K562 (cell line): ENCODE measurements at regions of chr22 and their contacts with region 1.

Region 1: GRCh38 chr22:37636186-37636948 is 3.1 kb upstream of the SH3BP1 start:
- DNase-seq: peak in 1 of 4 experiments; percentile 27
- ATAC-seq: no peak
- H3K4me3 ChIP-seq: no peak overlapping the region
- H3K27ac ChIP-seq: no peak overlapping the region
- H3K4me1 ChIP-seq: peaks cover 45 to 88% of the 10 kb centered on the region in 2 experiments
- H3K27me3 ChIP-seq: no peaks in the 10 kb centered on the region
- CTCF ChIP-seq: peak; percentile 27 to 62 (median 29); a peak in 4 of 6 replicates
- EP300 ChIP-seq: no peak
- POLR2A ChIP-seq: no peak
- RAD21 ChIP-seq: no peak

Region 2: GRCh38 chr22:37563153-37564081 is 73.0 kb before region 1 on chr22:
- CTCF ChIA-PET with region 1: no interaction called
- POLR2A ChIA-PET with region 1: no interaction called
- in situ Hi-C with region 1: no loop called
- intact Hi-C with region 1: no loop called
- DNase-seq: peak in 3 of 4 experiments; percentile 29 to 66 (median 58)
- ATAC-seq: peak; percentile 14; the same call in 1 of the 3 replicates
- H3K4me3 ChIP-seq: peak overlapping the region; percentile 83
- H3K27ac ChIP-seq: peak overlapping the region; percentile 97
- H3K4me1 ChIP-seq: peaks cover 26 to 61% of the 10 kb centered on the region in 2 experiments
- H3K27me3 ChIP-seq: no peaks in the 10 kb centered on the region
- CTCF ChIP-seq: no peak
- EP300 ChIP-seq: no peak
- POLR2A ChIP-seq: no peak
- RAD21 ChIP-seq: no peak

Region 3: DNA sequence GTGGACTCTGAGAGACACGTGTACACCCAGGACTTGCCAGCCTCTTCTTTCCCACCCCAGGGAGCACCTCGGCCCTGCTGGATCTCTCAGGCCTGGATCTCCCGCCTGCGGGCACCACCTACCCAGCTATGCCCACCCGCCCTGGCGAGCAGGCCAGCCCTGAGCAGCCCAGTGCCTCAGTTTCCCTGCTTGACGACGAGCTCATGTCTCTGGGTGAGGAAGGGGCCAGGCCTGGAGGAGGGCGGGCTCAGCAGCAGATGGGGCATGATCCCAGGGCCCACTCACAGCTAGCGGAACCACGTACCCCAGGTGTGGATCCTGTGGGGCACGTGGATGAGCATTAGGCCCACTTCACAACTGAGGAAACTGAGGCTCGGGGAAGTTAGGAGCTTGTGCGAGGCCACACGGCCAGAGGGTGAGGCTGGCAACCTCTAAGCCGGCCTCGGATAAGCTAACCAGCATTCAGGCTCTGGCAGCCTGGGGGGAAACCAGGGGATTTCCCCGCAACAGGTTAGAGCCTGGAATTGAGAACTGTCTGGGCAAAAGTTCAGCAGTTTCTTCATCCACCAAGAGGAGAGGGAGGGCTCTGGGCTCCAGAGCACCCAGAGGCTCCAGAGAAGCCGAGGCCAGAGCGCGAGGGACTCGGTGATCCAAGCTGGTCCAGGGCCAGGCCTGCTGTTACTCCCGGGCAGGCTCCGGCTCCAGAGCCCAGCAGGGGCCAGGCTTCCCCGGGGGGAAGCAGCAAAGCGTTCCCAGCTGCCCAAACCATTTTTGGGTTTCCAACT is 10.4 kb before region 1 on chr22:
- CTCF ChIA-PET with region 1: no interaction called
- POLR2A ChIA-PET with region 1: interaction called, 12 read pairs
- in situ Hi-C with region 1: no loop called
- intact Hi-C with region 1: no loop called
- DNase-seq: no peak
- ATAC-seq: no peak
- H3K4me3 ChIP-seq: no peak overlapping the region
- H3K27ac ChIP-seq: no peak overlapping the region
- H3K4me1 ChIP-seq: peaks cover 0 to 40% of the 10 kb centered on the region in 2 experiments; a peak in 3 of 5 replicates
- H3K27me3 ChIP-seq: no peaks in the 10 kb centered on the region
- CTCF ChIP-seq: no peak
- EP300 ChIP-seq: no peak
- POLR2A ChIP-seq: no peak
- RAD21 ChIP-seq: no peak